RWPE1 (cell line): ENCODE measurements at regions of chr3 and their contacts with region 1.

Region 1: GRCh38 chr3:158570999-158571974 is at the start of gene MLF1:
- DNase-seq: peak; percentile 97
- H3K27ac ChIP-seq: peak within 1 kb of the TSS; percentile 60
- CTCF ChIP-seq: no peak

Region 2: GRCh38 chr3:158352551-158352950 is 218.7 kb before region 1 on chr3:
- CTCF ChIA-PET with region 1: no interaction called
- POLR2A ChIA-PET with region 1: no interaction called
- DNase-seq: no peak
- H3K27ac ChIP-seq: no peak overlapping the region
- CTCF ChIP-seq: no peak

Region 3: GRCh38 chr3:158644345-158644908 is 73.1 kb after region 1 on chr3 and contains the start of gene GFM1:
- CTCF ChIA-PET with region 1: interaction called, 13 read pairs
- POLR2A ChIA-PET with region 1: interaction called, 6 read pairs
- DNase-seq: peak; percentile 87
- H3K27ac ChIP-seq: peak within 1 kb of the TSS; percentile 85
- CTCF ChIP-seq: peak; percentile 95